ENCODE measurements at regions of chr20 and their contacts with region 1.

Region 1: GRCh38 chr20:43537921-43538877 is 20.6 kb upstream of the SGK2 start:
- DNase-seq: peak; percentile 75
- H3K4me3 ChIP-seq: no peak overlapping the region
- H3K27ac ChIP-seq: no peak overlapping the region
- H3K4me1 ChIP-seq: peaks cover 0 to 2% (median 0%) of the 10 kb centered on the region in 4 donors
- H3K27me3 ChIP-seq: no peaks in the 10 kb centered on the region
- CTCF ChIP-seq: peak; percentile 87 to 92 (median 89)
- EP300 ChIP-seq: no peak
- POLR2A ChIP-seq: no peak

Region 2: DNA sequence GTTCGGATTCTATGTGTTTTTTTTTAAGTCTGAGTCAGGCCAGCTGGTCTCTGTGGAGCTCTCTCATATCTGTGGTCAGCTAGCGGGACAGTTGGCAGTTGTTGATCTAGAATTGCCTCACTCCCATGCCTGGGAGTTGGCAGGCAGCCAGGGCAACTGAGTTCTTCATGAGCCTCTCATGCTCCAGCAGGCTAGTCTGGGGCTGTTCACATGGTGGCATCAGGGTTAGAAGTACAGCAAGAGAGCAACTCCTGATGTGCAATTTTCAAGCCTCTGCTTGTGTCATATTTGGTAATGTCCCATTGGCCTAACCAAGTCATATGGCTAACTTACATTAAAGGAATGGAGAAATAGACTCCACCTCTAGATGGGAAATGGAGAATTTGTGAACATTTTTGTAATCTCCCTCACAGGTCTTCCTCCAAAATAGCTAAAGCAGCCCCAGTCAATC is 45.8 kb after region 1 on chr20:
- in situ Hi-C with region 1: no loop called
- intact Hi-C with region 1: loop called (anchors 1 kb)
- DNase-seq: peak; percentile 24
- H3K4me3 ChIP-seq: no peak overlapping the region
- H3K27ac ChIP-seq: no peak overlapping the region
- H3K4me1 ChIP-seq: peaks cover 0 to 18% (median 5%) of the 10 kb centered on the region in 4 donors
- H3K27me3 ChIP-seq: no peaks in the 10 kb centered on the region
- CTCF ChIP-seq: no peak
- EP300 ChIP-seq: no peak
- POLR2A ChIP-seq: no peak

Region 3: GRCh38 chr20:43681468-43681942 is 143.3 kb after region 1 on chr20:
- in situ Hi-C with region 1: loop called in 1 of 4 experiments (anchors 10 kb)
- intact Hi-C with region 1: no loop called
- DNase-seq: peak; percentile 25
- H3K4me3 ChIP-seq: no peak overlapping the region
- H3K27ac ChIP-seq: peak overlapping the region in 3 of 4 donors; percentile 29 to 76 (median 42)
- H3K4me1 ChIP-seq: no peaks in the 10 kb centered on the region
- H3K27me3 ChIP-seq: no peaks in the 10 kb centered on the region
- CTCF ChIP-seq: no peak
- EP300 ChIP-seq: no peak
- POLR2A ChIP-seq: no peak

Region 4: GRCh38 chr20:43691928-43692524 is 153.8 kb after region 1 on chr20:
- in situ Hi-C with region 1: loop called in 3 of 4 experiments (anchors 10 kb)
- intact Hi-C with region 1: no loop called
- DNase-seq: peak; percentile 79
- H3K4me3 ChIP-seq: no peak overlapping the region
- H3K27ac ChIP-seq: no peak overlapping the region
- H3K4me1 ChIP-seq: no peaks in the 10 kb centered on the region
- H3K27me3 ChIP-seq: no peaks in the 10 kb centered on the region
- CTCF ChIP-seq: peak; percentile 30 to 61 (median 57)
- EP300 ChIP-seq: no peak
- POLR2A ChIP-seq: no peak